Transverse colon (tissue), 4 donors: ENCODE measurements at regions of chr22 and their contacts with region 1.

Region 1: GRCh38 chr22:22235558-22235957 is 9.0 kb upstream of the VPREB1 start:
- DNase-seq: peak; percentile 46
- H3K4me3 ChIP-seq: no peak overlapping the region
- H3K27ac ChIP-seq: no peak overlapping the region
- H3K4me1 ChIP-seq: no peaks in the 10 kb centered on the region
- H3K27me3 ChIP-seq: no peaks in the 10 kb centered on the region
- CTCF ChIP-seq: peak; percentile 16 to 33 (median 23)
- EP300 ChIP-seq: no peak
- POLR2A ChIP-seq: no peak

Region 2: DNA sequence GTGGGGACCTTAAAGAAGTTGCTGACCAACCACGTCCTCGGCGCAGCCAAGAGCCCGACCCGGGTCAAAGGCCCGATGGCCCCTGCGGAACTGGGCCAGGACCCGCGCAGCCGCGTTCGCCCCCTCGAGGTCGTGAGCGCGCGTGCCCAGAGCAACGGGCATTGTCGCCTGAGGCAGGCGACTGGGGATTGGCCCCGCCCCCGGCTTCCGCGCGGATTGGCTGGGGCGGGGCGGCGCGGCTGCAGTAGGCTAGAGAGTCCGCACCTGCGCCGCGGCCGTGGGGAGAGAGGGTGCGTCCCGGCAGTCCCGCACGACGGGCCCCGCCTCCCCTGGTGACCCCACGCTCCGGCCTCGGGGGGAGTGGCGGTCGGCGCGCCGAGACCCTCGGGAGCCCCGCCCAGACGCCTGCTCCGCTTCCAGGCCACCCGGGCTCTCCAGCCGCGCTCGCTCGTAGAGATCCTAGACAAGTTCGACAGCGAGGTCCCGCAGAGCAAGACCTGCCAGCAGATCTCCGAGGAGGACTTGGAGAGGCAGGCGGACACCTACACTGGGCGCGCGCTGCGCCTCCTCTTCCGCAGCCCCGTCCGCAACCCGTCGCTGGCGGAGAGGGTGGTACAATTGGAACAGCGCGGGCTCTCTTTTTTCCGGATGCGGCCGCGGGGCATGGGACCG is 578.1 kb before region 1 on chr22:
- in situ Hi-C with region 1: no loop called
- intact Hi-C with region 1: no loop called
- DNase-seq: peak; percentile 89
- H3K4me3 ChIP-seq: peak overlapping the region; percentile 44 to 60 (median 52)
- H3K27ac ChIP-seq: peak overlapping the region in 3 of 4 donors; percentile 49 to 71 (median 65)
- H3K4me1 ChIP-seq: peaks cover 5 to 18% (median 14%) of the 10 kb centered on the region in 4 donors
- H3K27me3 ChIP-seq: peaks cover 9% of the 10 kb centered on the region
- CTCF ChIP-seq: peak in 3 of 5 experiments; percentile 16 to 32 (median 31)
- EP300 ChIP-seq: no peak
- POLR2A ChIP-seq: no peak

Region 3: DNA sequence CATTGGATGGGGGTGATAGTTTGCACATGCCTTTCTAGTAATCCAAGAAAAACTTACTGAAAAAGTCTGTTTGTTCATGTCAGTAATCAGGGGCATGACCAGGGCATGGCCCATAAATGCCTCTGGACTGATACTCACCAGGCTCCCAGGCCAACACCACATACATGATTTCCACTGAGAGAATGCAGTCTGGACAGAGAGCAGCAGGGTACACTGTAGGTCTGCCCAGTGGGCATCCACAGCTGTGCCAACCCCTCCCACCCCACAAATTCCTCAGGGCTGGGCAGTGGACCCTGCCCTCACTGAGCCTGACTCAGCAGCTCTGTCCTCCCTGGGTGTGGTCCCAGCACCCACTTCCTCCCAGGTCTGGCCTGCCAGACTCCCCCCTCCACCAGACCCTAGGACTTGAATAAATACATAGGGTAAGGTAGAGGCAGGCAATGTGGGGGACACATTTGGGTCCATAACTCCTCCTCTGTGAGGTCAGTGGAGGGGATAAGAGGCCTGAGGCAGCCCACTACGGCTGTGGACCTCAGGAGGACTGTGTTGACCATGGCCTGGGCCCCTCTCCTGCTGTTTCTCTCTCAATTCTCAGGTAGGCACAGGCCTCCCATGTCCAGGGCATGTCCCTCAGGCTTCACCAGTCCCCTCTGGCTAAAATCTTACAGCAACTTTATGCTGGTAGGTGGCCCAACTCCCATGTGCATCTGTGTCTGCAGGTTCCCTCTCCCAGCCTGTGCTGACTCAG is 160.8 kb before region 1 on chr22:
- in situ Hi-C with region 1: no loop called
- intact Hi-C with region 1: no loop called
- DNase-seq: no peak
- H3K4me3 ChIP-seq: no peak overlapping the region
- H3K27ac ChIP-seq: no peak overlapping the region
- H3K4me1 ChIP-seq: no peaks in the 10 kb centered on the region
- H3K27me3 ChIP-seq: peaks cover 11% of the 10 kb centered on the region
- CTCF ChIP-seq: no peak
- EP300 ChIP-seq: no peak
- POLR2A ChIP-seq: no peak

Region 4: GRCh38 chr22:22342697-22343580 is 107.4 kb after region 1 on chr22:
- in situ Hi-C with region 1: loop called in 1 of 4 experiments (anchors 25 kb)
- intact Hi-C with region 1: no loop called
- DNase-seq: peak; percentile 86
- H3K4me3 ChIP-seq: no peak overlapping the region
- H3K27ac ChIP-seq: no peak overlapping the region
- H3K4me1 ChIP-seq: no peaks in the 10 kb centered on the region
- H3K27me3 ChIP-seq: peaks cover 16% of the 10 kb centered on the region
- CTCF ChIP-seq: peak; percentile 61 to 88 (median 79)
- EP300 ChIP-seq: no peak
- POLR2A ChIP-seq: no peak

Region 5: GRCh38 chr22:22422629-22423112 is 187.1 kb after region 1 on chr22:
- in situ Hi-C with region 1: no loop called
- intact Hi-C with region 1: no loop called
- DNase-seq: peak; percentile 79
- H3K4me3 ChIP-seq: no peak overlapping the region
- H3K27ac ChIP-seq: no peak overlapping the region
- H3K4me1 ChIP-seq: no peaks in the 10 kb centered on the region
- H3K27me3 ChIP-seq: peaks cover 48% of the 10 kb centered on the region
- CTCF ChIP-seq: peak; percentile 29 to 75 (median 62)
- EP300 ChIP-seq: no peak
- POLR2A ChIP-seq: no peak

Region 6: GRCh38 chr22:22433770-22434169 is 198.2 kb after region 1 on chr22:
- in situ Hi-C with region 1: no loop called
- intact Hi-C with region 1: no loop called
- DNase-seq: peak; percentile 15
- H3K4me3 ChIP-seq: no peak overlapping the region
- H3K27ac ChIP-seq: no peak overlapping the region
- H3K4me1 ChIP-seq: no peaks in the 10 kb centered on the region
- H3K27me3 ChIP-seq: peaks cover 10% of the 10 kb centered on the region
- CTCF ChIP-seq: no peak
- EP300 ChIP-seq: no peak
- POLR2A ChIP-seq: no peak